Activated T-helper 1 cell treated with anti-CD3 and anti-CD28 coated beads, Interleukin-12 subunit alpha, Interleukin-12 subunit beta, Interleukin-2, Interleukin-4 antibody, amounts not matched to agents 30 ng/mL and 10 ng/mL and 1 ng/mL, durations not matched to agents 14 hours and 24 hours and 36 hours (primary cell): ENCODE measurements at regions of chr1 and their contacts with region 1.

Region 1: DNA sequence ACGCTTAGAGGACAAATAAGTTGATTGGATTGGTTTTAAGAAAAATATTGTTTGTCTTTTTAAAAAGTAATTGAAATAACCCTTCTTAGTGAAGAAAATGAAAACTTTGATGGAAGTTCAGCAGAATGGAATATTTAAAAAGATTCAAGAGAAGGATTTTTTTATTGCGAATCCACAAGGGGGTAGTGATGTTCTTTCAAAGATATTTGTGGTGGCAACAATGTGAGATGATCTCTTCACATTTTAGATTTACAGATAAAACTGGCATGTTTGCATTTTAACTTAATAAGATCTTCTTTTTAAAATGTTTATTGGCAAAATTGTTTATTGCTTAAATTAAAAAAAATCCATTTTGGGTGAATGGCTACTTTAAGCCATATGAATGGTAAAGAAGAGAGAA is 8.9 kb downstream of the CAMTA1 start:
- DNase-seq: no peak
- H3K4me3 Mint-ChIP-seq: no peak overlapping the region
- H3K27ac Mint-ChIP-seq: no peak overlapping the region
- H3K4me1 Mint-ChIP-seq: peaks cover 16% of the 10 kb centered on the region
- H3K27me3 Mint-ChIP-seq: no peaks in the 10 kb centered on the region

Region 2: DNA sequence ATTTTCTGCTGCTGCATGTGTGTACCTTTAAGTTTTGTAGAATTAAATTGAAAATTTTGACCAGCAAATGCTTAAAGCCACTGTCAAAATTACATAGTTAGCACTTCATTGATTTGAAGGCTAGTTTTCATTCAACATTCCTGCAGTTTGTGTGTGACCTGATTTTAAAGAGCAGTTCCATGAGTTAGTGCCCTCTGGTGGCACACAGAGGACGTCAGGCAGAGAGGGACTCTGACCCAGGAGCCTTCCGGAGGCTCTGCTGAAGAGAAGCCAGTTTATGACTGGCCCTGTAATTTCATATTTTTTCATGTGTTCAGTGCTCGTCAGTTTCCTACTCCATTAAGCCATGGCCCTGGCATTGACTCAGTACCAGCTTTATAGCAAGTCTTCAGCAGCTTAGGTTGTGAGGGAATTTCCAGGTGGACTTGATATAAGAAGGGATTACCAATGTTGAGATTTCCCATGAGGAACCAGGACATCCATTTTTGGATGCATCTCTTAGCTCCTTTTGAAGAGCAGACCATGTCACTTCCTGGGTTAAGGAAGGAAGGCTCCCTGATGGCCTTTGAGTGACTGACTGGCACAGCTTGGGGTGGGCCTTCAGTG is 95.8 kb after region 1 on chr1:
- intact Hi-C with region 1: loop called (anchors 1 kb)
- DNase-seq: no peak
- H3K4me3 Mint-ChIP-seq: no peak overlapping the region
- H3K27ac Mint-ChIP-seq: no peak overlapping the region
- H3K4me1 Mint-ChIP-seq: no peaks in the 10 kb centered on the region
- H3K27me3 Mint-ChIP-seq: no peaks in the 10 kb centered on the region

Region 3: DNA sequence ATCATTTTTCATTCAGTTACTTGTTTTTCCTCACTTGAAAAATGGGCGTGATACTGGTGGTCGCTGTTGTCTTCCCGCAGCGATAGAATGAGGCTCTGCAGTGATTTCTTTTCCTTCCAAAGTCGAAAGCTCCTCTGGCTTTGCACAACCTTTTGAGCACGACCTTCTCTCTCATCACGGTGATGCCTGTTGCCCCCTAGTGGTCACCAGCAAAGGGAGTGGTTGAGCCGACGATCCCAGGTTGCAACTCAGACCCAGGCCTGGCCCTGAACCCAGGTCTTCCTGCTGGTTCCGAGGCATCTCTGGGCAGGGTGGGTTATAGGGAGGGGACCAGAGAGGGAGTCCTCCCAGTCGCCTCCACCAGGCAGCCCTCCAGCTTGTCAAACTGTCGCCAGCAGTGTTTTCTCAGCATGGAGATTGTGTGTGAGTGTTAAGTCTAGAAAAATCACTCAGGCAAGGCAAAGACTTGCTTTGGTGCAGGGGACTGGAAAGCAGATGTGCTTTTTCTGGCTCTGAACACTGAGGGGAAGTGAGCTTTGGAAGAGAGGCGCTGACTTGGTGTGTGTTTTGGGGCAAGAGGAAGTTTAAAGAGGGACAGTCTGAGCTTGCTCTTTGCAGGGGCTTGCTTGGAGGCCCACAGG is 276.3 kb after region 1 on chr1:
- intact Hi-C with region 1: loop called (anchors 2 kb)
- DNase-seq: peak; percentile 23
- H3K4me3 Mint-ChIP-seq: no peak overlapping the region
- H3K27ac Mint-ChIP-seq: no peak overlapping the region
- H3K4me1 Mint-ChIP-seq: no peaks in the 10 kb centered on the region
- H3K27me3 Mint-ChIP-seq: peaks cover 4% of the 10 kb centered on the region